IMR-90 (cell line): ENCODE measurements at regions of chr4 and their contacts with region 1.

Region 1: GRCh38 chr4:106546370-106546769 is 177.8 kb upstream of the GIMD1 start:
- DNase-seq: no peak
- ATAC-seq: no peak
- H3K4me3 ChIP-seq: no peak overlapping the region
- H3K27ac ChIP-seq: no peak overlapping the region
- H3K4me1 ChIP-seq: no peaks in the 10 kb centered on the region
- H3K27me3 ChIP-seq: no peaks in the 10 kb centered on the region
- CTCF ChIP-seq: no peak
- POLR2A ChIP-seq: no peak
- RAD21 ChIP-seq: no peak

Region 2: DNA sequence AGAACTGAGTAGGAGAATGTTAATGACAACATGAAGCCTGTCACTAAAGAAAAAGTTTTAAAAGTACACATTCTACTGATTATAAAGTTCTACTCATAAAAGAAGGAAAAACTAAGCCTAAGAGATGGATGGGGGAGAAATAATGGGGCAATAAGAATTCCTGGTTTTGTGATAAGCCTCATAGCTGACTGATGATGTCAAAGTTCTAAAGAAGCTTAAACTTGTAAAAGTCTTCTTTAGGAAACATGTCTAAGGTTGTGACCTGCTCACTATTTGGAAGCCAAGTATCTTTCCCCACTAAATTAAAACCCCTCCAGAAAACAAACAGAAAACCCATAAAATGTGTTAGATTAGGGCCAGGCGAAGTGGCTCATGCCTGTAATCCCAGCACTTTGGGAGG is 55.1 kb after region 1 on chr4:
- CTCF ChIA-PET with region 1: no interaction called
- POLR2A ChIA-PET with region 1: no interaction called
- dilution Hi-C with region 1: no loop called
- in situ Hi-C with region 1: no loop called
- intact Hi-C with region 1: loop called (anchors 5 kb)
- DNase-seq: no peak
- ATAC-seq: no peak
- H3K4me3 ChIP-seq: no peak overlapping the region
- H3K27ac ChIP-seq: no peak overlapping the region
- H3K4me1 ChIP-seq: no peaks in the 10 kb centered on the region
- H3K27me3 ChIP-seq: no peaks in the 10 kb centered on the region
- CTCF ChIP-seq: no peak
- POLR2A ChIP-seq: no peak
- RAD21 ChIP-seq: no peak